ENCODE measurements at regions of chr16 and their contacts with region 1.

Region 1: GRCh38 chr16:85717393-85718121 is 28.8 kb upstream of the GINS2 start:
- DNase-seq: peak; percentile 79
- H3K4me3 Mint-ChIP-seq: no peak overlapping the region
- H3K27ac Mint-ChIP-seq: no peak overlapping the region
- H3K4me1 Mint-ChIP-seq: peaks cover 11% of the 10 kb centered on the region
- H3K27me3 Mint-ChIP-seq: peaks cover 5% of the 10 kb centered on the region

Region 2: GRCh38 chr16:85393674-85394483 is 323.7 kb before region 1 on chr16:
- CTCF ChIA-PET with region 1: no interaction called
- intact Hi-C with region 1: loop called (anchors 10 kb)
- DNase-seq: peak; percentile 68
- H3K4me3 Mint-ChIP-seq: no peak overlapping the region
- H3K27ac Mint-ChIP-seq: no peak overlapping the region
- H3K4me1 Mint-ChIP-seq: no peaks in the 10 kb centered on the region
- H3K27me3 Mint-ChIP-seq: no peaks in the 10 kb centered on the region

Region 3: GRCh38 chr16:85420501-85421337 is 296.8 kb before region 1 on chr16:
- CTCF ChIA-PET with region 1: interaction called, 3 read pairs
- intact Hi-C with region 1: loop called (anchors 2 kb)
- DNase-seq: peak; percentile 71
- H3K4me3 Mint-ChIP-seq: no peak overlapping the region
- H3K27ac Mint-ChIP-seq: no peak overlapping the region
- H3K4me1 Mint-ChIP-seq: peaks cover 4% of the 10 kb centered on the region
- H3K27me3 Mint-ChIP-seq: no peaks in the 10 kb centered on the region

Region 4: GRCh38 chr16:85659805-85660495 is 57.6 kb before region 1 on chr16:
- CTCF ChIA-PET with region 1: interaction called, 34 read pairs
- intact Hi-C with region 1: loop called (anchors 1 kb)
- DNase-seq: peak; percentile 81
- H3K4me3 Mint-ChIP-seq: no peak overlapping the region
- H3K27ac Mint-ChIP-seq: no peak overlapping the region
- H3K4me1 Mint-ChIP-seq: no peaks in the 10 kb centered on the region
- H3K27me3 Mint-ChIP-seq: no peaks in the 10 kb centered on the region

Region 5: GRCh38 chr16:85675251-85675927 is 42.2 kb before region 1 on chr16:
- CTCF ChIA-PET with region 1: interaction called, 5 read pairs
- intact Hi-C with region 1: loop called (anchors 5 kb)
- DNase-seq: no peak
- H3K4me3 Mint-ChIP-seq: no peak overlapping the region
- H3K27ac Mint-ChIP-seq: no peak overlapping the region
- H3K4me1 Mint-ChIP-seq: no peaks in the 10 kb centered on the region
- H3K27me3 Mint-ChIP-seq: no peaks in the 10 kb centered on the region